ENCODE measurements at regions of chr14 and their contacts with region 1.

Region 1: DNA sequence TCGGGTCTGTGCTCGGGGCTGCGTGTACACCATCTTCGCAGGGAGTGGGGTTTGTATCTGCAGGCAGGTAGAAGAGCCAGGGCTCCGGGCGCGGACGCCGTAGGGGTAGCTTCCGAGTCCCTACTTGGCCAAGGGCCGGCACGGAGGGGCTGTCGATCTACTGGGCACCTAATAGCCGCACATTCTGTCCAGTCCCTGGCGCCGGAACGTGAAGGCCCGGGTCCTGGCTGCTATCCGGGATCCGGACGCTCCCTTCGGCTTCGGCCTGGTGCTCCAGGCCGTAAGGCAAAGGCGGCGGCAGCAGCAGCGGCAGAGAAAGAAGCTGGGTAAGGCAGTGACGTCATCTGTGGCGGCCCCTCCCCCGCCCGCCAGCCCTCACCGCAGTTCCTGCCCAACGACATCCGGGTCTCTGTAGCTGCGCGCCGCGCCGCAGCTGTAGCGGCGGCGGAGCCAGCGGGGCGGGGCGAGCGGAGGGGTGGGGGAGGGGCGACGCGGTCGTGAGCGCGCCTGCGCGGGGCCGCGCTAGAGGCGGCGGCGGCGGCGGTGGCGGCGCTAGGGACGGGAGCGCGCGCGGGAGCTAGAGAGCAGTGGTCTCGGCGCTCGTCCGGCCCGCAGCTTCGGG is at the start of gene PPM1A:
- DNase-seq: peak; percentile 91 to 95 (median 93)
- ATAC-seq: peak; percentile 89
- H3K4me3 ChIP-seq: peak within 1 kb of the TSS; percentile 93
- H3K4me3 Mint-ChIP-seq: peak within 1 kb of the TSS; percentile 90 to 99 (median 96)
- H3K27ac ChIP-seq: peak within 1 kb of the TSS; percentile 100
- H3K27ac Mint-ChIP-seq: peak within 1 kb of the TSS; percentile 97 to 100 (median 100)
- H3K4me1 ChIP-seq: peaks cover 7 to 44% of the 10 kb centered on the region in 2 donors
- H3K4me1 Mint-ChIP-seq: peaks cover 40 to 58% (median 50%) of the 10 kb centered on the region in 7 donors
- H3K27me3 ChIP-seq: no peaks in the 10 kb centered on the region
- H3K27me3 Mint-ChIP-seq: no peaks in the 10 kb centered on the region
- total RNA-seq, gene PPM1A: 42.0 to 71.4 (median 47.3) TPM

Region 2: DNA sequence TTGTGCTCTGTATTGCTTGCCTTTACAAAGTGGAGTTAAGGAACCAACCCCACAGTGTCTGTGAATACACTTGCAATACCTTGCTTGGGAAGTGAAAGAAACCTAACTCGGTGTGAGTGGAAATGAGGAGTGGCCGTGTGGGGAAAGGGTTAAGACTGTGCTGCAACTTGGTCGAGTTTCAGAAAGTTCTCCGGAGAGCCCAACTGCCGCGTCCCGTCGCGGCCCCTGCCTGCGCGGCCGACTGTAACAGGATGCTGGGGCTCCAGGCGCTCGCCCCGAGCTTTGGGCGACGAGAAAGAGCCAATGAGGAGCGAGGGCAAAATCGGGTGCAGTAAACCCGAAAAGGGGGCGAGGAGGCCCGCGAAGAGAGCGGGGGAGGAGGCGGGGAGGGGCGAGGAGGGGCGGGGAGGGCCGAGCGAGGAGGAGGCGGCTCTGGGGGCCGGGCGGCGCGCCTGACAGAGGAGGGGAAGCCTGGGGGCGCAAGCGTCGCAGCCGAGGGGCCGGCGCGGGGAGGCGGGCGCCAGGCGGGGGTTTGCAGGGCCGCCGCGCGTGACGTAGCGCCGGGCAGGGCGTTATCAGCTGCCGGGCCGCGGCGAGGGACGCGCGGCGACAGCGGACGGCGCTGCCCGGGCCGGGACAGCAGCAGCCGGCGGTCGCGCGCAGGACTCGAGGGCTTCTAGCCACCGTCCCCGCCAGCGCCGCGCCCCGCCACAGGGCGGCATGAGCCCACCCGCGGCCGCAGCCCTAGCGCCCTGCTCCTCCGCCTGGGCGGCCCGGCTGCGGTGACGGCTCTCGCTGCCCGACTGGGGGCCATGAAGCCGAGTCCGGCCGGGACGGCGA is 1611.2 kb before region 1 on chr14 and contains the start of gene DACT1:
- CTCF ChIA-PET with region 1: no interaction called
- POLR2A ChIA-PET with region 1: no interaction called
- intact Hi-C with region 1: loop called (anchors 1 to 5 kb)
- DNase-seq: peak; percentile 45 to 74 (median 64)
- ATAC-seq: peak; percentile 80
- H3K4me3 ChIP-seq: peak within 1 kb of the TSS; percentile 80
- H3K4me3 Mint-ChIP-seq: peak within 1 kb of the TSS; percentile 89 to 99 (median 98)
- H3K27ac ChIP-seq: peak within 1 kb of the TSS; percentile 61
- H3K27ac Mint-ChIP-seq: peak within 1 kb of the TSS; percentile 84 to 95 (median 91)
- H3K4me1 ChIP-seq: peaks cover 0 to 22% of the 10 kb centered on the region in 2 donors
- H3K4me1 Mint-ChIP-seq: peaks cover 20 to 61% (median 45%) of the 10 kb centered on the region in 7 donors
- H3K27me3 ChIP-seq: no peaks in the 10 kb centered on the region
- H3K27me3 Mint-ChIP-seq: peaks cover 0 to 44% (median 6%) of the 10 kb centered on the region in 5 donors
- total RNA-seq, gene DACT1: 8.2 to 32.3 (median 15.0) TPM

Region 3: DNA sequence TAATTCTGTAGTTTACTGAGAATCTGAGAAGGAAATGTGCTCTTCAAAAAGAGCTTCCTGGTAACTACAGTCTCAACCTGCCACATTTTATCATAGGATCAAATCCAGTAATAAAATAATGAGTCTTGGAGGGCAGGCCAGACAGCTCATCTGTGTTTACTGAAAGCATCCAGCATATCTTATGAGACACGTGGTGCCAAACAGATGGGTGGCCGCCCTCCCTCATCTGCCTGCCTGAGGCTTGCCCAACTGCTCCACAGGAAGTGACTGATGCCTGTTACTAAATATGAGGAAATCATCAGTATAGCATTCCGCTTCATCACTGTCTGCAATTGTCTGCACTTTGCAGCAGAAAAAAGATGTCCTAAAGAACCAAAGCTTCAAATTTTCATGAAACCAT is 97.1 kb before region 1 on chr14:
- CTCF ChIA-PET with region 1: no interaction called
- POLR2A ChIA-PET with region 1: no interaction called
- intact Hi-C with region 1: loop called in 1 of 2 experiments (anchors 5 kb)
- DNase-seq: peak; percentile 13 to 69 (median 60)
- ATAC-seq: peak; percentile 98
- H3K4me3 ChIP-seq: no peak overlapping the region
- H3K4me3 Mint-ChIP-seq: peak overlapping the region in 8 of 10 donors; percentile 3 to 43 (median 36)
- H3K27ac ChIP-seq: peak overlapping the region; percentile 52
- H3K27ac Mint-ChIP-seq: peak overlapping the region; percentile 84 to 94 (median 88)
- H3K4me1 ChIP-seq: peaks cover 23% of the 10 kb centered on the region in 2 donors
- H3K4me1 Mint-ChIP-seq: peaks cover 28 to 56% (median 48%) of the 10 kb centered on the region in 7 donors
- H3K27me3 ChIP-seq: no peaks in the 10 kb centered on the region
- H3K27me3 Mint-ChIP-seq: no peaks in the 10 kb centered on the region

Region 4: GRCh38 chr14:60266021-60266937 is 17.5 kb after region 1 on chr14:
- CTCF ChIA-PET with region 1: interaction called, 3 read pairs
- POLR2A ChIA-PET with region 1: interaction called, 4 read pairs
- intact Hi-C with region 1: loop called (anchors 1 kb)
- DNase-seq: peak in 4 of 9 donors; percentile 12 to 22 (median 16)
- ATAC-seq: peak; percentile 70
- H3K4me3 ChIP-seq: no peak overlapping the region
- H3K4me3 Mint-ChIP-seq: no peak overlapping the region
- H3K27ac ChIP-seq: no peak overlapping the region
- H3K27ac Mint-ChIP-seq: no peak overlapping the region
- H3K4me1 ChIP-seq: peaks cover under 1 to 3% of the 10 kb centered on the region in 2 donors
- H3K4me1 Mint-ChIP-seq: peaks cover 10 to 68% (median 53%) of the 10 kb centered on the region in 7 donors
- H3K27me3 ChIP-seq: no peaks in the 10 kb centered on the region
- H3K27me3 Mint-ChIP-seq: no peaks in the 10 kb centered on the region

Region 5: DNA sequence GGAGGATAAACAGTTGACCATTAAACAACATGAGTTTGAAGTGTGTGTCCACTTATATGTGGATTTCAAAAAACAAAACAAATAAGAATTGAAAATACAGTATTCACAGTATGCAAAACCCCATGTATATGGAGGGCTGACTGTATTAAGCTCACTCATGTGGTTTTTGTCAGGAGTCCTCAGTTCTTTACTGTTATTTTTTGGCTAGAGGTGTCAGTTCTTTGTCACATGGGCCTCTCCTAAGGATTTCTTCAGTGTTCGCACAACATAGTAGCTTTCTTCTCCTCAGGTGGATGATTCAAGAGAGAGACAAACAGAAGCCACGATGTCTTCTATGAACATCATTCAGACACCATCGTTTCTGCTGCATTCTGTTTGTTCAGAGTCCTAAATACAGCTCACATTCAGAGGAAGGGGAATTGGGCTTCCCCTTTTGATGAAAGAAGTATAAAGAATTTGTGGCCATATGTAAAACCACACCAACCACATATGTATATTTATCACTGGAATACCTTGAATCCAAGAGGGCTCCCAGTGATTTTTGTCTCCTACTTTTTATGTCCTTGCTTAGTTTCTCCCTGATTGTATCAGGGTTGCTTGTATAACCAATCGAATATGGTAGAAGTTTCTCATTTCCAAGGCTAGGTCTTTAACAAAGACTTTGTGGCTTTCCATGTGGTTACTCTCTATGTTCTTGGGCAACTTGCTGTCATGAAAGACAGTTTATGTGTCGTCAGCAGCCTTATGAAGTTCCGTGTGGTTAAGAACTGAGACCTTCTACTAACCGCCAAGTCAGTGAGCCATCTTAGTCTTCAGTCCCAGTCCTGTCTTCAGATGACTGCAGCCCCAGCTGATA is 504.7 kb after region 1 on chr14:
- CTCF ChIA-PET with region 1: no interaction called
- POLR2A ChIA-PET with region 1: no interaction called
- intact Hi-C with region 1: loop called in 1 of 2 experiments (anchors 1 kb)
- DNase-seq: peak in 8 of 9 donors; percentile 54 to 86 (median 81)
- ATAC-seq: peak; percentile 96
- H3K4me3 ChIP-seq: no peak overlapping the region
- H3K4me3 Mint-ChIP-seq: peak overlapping the region in 9 of 10 donors; percentile 48 to 85 (median 61)
- H3K27ac ChIP-seq: no peak overlapping the region
- H3K27ac Mint-ChIP-seq: peak overlapping the region; percentile 29 to 93 (median 81)
- H3K4me1 ChIP-seq: peaks cover 19 to 20% of the 10 kb centered on the region in 2 donors
- H3K4me1 Mint-ChIP-seq: peaks cover 21 to 64% (median 42%) of the 10 kb centered on the region in 7 donors
- H3K27me3 ChIP-seq: no peaks in the 10 kb centered on the region
- H3K27me3 Mint-ChIP-seq: peaks cover 0 to 7% (median 0%) of the 10 kb centered on the region in 5 donors

Region 6: DNA sequence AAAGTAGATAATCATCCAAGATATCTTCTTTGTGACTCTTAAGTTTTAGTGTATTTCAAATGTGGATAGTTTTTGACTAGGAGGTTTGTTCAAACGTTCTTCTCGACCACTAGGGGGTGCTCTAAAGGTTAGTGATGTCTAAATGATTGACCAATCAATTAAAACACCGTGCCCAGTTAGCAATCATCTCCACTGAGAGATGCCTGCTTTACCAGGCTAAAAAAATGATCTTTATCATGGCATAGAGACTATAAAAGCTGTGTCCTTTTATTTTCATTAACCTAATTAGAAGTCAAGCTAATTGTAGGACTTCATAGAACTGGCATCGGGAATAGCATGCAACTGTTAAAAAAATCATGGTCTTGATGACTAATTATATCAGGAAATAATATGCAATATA is 1226.5 kb after region 1 on chr14:
- CTCF ChIA-PET with region 1: no interaction called
- POLR2A ChIA-PET with region 1: no interaction called
- intact Hi-C with region 1: loop called in 1 of 2 experiments (anchors 5 kb)
- DNase-seq: peak in 2 of 9 donors; percentile 32 to 34
- ATAC-seq: no peak
- H3K4me3 ChIP-seq: no peak overlapping the region
- H3K4me3 Mint-ChIP-seq: peak overlapping the region in 8 of 10 donors; percentile 28 to 94 (median 48)
- H3K27ac ChIP-seq: peak overlapping the region; percentile 98
- H3K27ac Mint-ChIP-seq: peak overlapping the region in 8 of 9 donors; percentile 84 to 100 (median 96)
- H3K4me1 ChIP-seq: peaks cover 93 to 95% of the 10 kb centered on the region in 2 donors
- H3K4me1 Mint-ChIP-seq: peaks cover 55 to 98% (median 95%) of the 10 kb centered on the region in 7 donors
- H3K27me3 ChIP-seq: no peaks in the 10 kb centered on the region
- H3K27me3 Mint-ChIP-seq: no peaks in the 10 kb centered on the region

Measured in naive thymus-derived CD4-positive, alpha-beta T cell (primary cell).